Caco-2 (cell line): ENCODE measurements at regions of chr17 and their contacts with region 1.

Region 1: GRCh38 chr17:50397111-50397918 is at the start of gene LRRC59:
- DNase-seq: peak; percentile 96 to 100
- H3K4me3 ChIP-seq: peak within 1 kb of the TSS; percentile 72
- H3K4me3 Mint-ChIP-seq: peak within 1 kb of the TSS; percentile 76
- H3K27ac Mint-ChIP-seq: peak within 1 kb of the TSS; percentile 71
- H3K4me1 ChIP-seq: peaks cover 5% of the 10 kb centered on the region; the same call in 1 of the 2 replicates
- H3K4me1 Mint-ChIP-seq: peaks cover 12% of the 10 kb centered on the region
- H3K27me3 ChIP-seq: no peaks in the 10 kb centered on the region
- H3K27me3 Mint-ChIP-seq: no peaks in the 10 kb centered on the region
- CTCF ChIP-seq: peak; percentile 100
- total RNA-seq, gene LRRC59: 324 and 336 TPM in 2 replicates

Region 2: DNA sequence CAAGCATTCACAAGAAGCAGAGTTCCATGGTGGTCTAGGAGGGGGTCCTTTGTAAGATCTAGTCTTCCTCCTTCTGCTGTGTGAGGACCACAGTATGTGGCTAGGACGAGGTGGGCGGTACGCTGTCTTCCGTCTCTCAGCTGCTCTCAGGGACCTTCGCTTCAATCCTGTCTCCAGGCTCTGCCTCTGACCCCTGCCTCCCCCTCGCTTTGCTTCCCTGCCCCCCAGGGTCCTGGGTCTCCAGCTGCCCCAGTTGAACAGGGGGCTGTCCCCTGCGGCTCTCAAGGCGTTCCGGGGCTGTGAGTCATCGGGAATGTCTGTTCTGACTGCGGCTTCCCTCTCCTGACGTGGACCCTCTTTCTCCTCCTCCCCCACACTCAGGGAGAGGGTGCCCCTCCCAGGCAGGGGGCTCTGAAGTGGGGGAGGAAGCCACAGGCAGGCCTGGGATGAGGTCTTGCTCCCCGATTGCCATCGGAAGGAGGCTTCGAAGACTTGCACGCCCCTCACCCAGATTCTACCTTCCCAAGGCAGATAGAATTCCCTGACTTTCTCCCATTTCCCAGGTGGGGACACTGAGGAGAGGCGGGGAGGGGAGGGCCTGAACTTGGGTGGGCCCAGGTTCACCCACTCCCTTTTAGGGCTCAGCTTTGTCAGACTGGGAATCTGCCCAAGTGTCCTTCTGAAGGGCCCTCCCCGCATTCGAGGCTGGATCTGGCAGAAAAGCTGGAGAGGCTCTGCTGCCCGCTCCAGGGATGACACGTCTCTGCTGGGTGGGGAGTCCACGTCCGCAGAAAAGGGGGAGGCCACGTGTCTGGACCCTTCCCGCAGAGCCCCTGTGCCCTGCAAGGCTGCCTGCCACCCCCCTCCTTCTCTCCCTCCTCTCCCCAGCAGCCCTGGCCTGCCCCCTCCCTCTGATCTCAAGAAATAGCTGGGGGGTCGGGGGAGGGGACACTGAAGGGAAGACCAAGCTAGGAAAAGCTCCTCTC is 186.8 kb before region 1 on chr17:
- CTCF ChIA-PET with region 1: no interaction called
- POLR2A ChIA-PET with region 1: no interaction called
- intact Hi-C with region 1: no loop called
- DNase-seq: peak; percentile 70 to 93
- H3K4me3 ChIP-seq: no peak overlapping the region
- H3K4me3 Mint-ChIP-seq: peak overlapping the region; percentile 27
- H3K27ac Mint-ChIP-seq: peak overlapping the region; percentile 56
- H3K4me1 ChIP-seq: peaks cover 74% of the 10 kb centered on the region
- H3K4me1 Mint-ChIP-seq: peaks cover 73% of the 10 kb centered on the region
- H3K27me3 ChIP-seq: no peaks in the 10 kb centered on the region
- H3K27me3 Mint-ChIP-seq: no peaks in the 10 kb centered on the region
- CTCF ChIP-seq: no peak

Region 3: DNA sequence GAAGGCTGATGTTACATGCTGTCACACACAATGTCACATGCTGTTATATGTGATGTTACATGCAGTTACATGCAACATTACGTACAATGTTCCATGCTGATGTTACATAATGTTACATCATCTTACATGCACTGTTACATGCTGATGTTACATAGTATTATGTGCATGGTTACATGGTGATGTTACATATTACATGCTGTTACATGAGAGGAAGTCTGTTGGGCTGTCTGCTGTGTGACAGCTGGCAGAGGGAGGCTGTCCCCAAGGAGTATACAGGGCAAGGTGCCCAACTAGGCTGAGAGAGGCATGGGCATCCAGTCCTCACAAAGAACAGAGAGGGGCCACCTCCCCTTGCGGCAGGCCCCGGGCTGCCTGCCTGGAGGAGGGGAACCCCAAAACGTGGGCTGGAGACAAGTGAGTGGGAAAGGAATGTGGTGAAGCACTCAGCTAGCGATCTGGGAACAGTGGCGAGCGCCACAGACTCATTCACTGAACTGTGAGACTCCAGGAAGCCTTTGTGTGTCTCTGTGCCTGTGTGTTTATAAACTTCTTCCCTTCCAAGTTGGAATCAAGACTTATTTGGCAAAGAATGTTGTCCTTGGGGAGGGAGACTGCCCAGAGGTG is 92.4 kb before region 1 on chr17:
- CTCF ChIA-PET with region 1: no interaction called
- POLR2A ChIA-PET with region 1: no interaction called
- intact Hi-C with region 1: no loop called
- DNase-seq: no peak
- H3K4me3 ChIP-seq: no peak overlapping the region
- H3K4me3 Mint-ChIP-seq: no peak overlapping the region
- H3K27ac Mint-ChIP-seq: peak overlapping the region; percentile 41
- H3K4me1 ChIP-seq: peaks cover 5% of the 10 kb centered on the region; the same call in 1 of the 2 replicates
- H3K4me1 Mint-ChIP-seq: peaks cover 20% of the 10 kb centered on the region
- H3K27me3 ChIP-seq: no peaks in the 10 kb centered on the region
- H3K27me3 Mint-ChIP-seq: no peaks in the 10 kb centered on the region
- CTCF ChIP-seq: no peak

Region 4: GRCh38 chr17:50345432-50346312 is 51.6 kb before region 1 on chr17 and contains the start of gene XYLT2:
- CTCF ChIA-PET with region 1: interaction called, 19 read pairs
- POLR2A ChIA-PET with region 1: interaction called, 9 read pairs
- intact Hi-C with region 1: loop called (anchors 2 kb)
- DNase-seq: peak; percentile 94 to 99
- H3K4me3 ChIP-seq: peak within 1 kb of the TSS; percentile 85
- H3K4me3 Mint-ChIP-seq: peak within 1 kb of the TSS; percentile 96
- H3K27ac Mint-ChIP-seq: peak within 1 kb of the TSS; percentile 81
- H3K4me1 ChIP-seq: peaks cover 13% of the 10 kb centered on the region
- H3K4me1 Mint-ChIP-seq: peaks cover 22% of the 10 kb centered on the region
- H3K27me3 ChIP-seq: no peaks in the 10 kb centered on the region
- H3K27me3 Mint-ChIP-seq: no peaks in the 10 kb centered on the region
- CTCF ChIP-seq: no peak
- total RNA-seq, gene XYLT2: 72.9 and 75.8 TPM in 2 replicates

Region 5: DNA sequence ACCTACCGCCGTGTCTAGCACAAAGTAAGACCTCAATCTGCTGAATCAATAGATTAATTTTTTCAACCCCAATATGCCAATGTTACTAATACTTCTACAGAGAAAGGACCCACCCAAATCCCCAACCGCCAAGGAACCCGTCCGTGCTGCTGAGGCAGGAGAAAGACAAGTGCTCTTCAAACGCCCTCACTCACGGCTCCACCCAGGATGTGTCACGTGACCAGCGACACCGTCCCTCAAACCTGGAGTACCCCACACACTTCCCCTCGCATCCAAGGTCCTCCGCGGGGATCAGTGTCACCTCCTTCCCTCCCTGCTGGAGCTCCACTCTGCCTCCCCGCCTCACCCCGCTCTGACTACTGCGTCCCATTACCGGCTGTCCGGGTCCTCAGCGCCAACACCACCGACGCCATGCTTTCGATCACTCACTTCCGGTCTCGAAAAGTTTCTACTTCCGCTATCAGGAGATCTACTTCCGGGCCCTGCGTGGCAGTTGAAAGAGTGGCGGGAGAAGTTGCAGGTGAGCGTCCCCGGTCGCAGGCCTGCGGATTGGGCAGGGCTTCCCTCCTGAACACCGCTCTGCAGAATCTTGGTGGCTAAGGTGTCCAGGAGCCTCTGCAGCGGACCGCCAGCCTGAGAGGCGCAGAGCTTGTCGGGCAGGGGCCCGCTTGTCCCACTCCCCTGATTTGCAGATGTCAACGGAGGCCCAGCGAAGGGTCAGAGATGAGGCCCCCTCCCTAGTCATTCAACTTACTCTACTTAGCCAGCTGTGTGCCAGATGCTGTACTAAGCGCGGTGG is 24.4 kb before region 1 on chr17 and contains the starts of genes EME1 and MRPL27:
- CTCF ChIA-PET with region 1: interaction called, 13 read pairs
- POLR2A ChIA-PET with region 1: interaction called, 7 read pairs
- intact Hi-C with region 1: no loop called
- DNase-seq: peak; percentile 96
- H3K4me3 ChIP-seq: peak within 1 kb of the TSS; percentile 52
- H3K4me3 Mint-ChIP-seq: peak within 1 kb of the TSS; percentile 89
- H3K27ac Mint-ChIP-seq: peak within 1 kb of the TSS; percentile 98
- H3K4me1 ChIP-seq: peaks cover 7% of the 10 kb centered on the region; the same call in 1 of the 2 replicates
- H3K4me1 Mint-ChIP-seq: peaks cover 17% of the 10 kb centered on the region
- H3K27me3 ChIP-seq: no peaks in the 10 kb centered on the region
- H3K27me3 Mint-ChIP-seq: no peaks in the 10 kb centered on the region
- CTCF ChIP-seq: no peak
- total RNA-seq, gene EME1: 43.5 and 48.5 TPM in 2 replicates
- total RNA-seq, gene MRPL27: 196 and 203 TPM in 2 replicates

Region 6: GRCh38 chr17:50425682-50426471 is 28.6 kb after region 1 on chr17 and contains the start of gene ACSF2:
- CTCF ChIA-PET with region 1: interaction called, 40 read pairs
- POLR2A ChIA-PET with region 1: interaction called, 9 read pairs
- intact Hi-C with region 1: loop called (anchors 1 kb)
- DNase-seq: peak; percentile 92 to 93
- H3K4me3 ChIP-seq: peak within 1 kb of the TSS; percentile 74
- H3K4me3 Mint-ChIP-seq: peak within 1 kb of the TSS; percentile 80
- H3K27ac Mint-ChIP-seq: peak within 1 kb of the TSS; percentile 54
- H3K4me1 ChIP-seq: peaks cover 64% of the 10 kb centered on the region
- H3K4me1 Mint-ChIP-seq: peaks cover 60% of the 10 kb centered on the region
- H3K27me3 ChIP-seq: no peaks in the 10 kb centered on the region
- H3K27me3 Mint-ChIP-seq: no peaks in the 10 kb centered on the region
- CTCF ChIP-seq: peak in 1 of 2 experiments; percentile 35
- total RNA-seq, gene ACSF2: 135 and 161 TPM in 2 replicates

Region 7: DNA sequence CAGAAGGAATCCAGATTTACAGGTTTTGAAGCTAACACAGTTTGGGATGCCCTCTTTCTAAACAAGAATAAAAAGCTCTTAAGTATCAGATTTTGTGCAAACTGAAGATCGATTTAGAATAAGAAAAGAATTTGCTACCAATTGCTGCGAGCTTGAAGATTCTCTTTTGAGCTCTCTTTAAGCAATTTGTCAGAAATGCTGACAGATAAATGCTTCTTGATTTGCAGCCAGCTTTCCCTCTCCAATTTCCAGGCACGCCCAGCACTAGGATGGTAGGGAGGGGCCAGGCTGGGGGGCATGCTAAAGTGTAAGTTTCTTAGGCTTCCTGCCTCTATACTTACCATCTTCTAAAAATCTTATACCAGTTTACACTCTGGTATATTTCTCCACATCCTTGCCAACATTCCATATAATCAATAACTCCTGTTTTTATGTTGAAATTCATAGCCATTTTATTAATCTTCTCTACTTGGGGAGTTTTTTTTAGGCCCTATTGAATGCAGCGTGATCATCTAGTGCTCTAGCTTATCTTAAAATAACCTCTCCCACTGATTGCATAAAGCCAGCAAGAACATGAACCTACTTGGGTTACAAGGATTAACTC is 46.2 kb after region 1 on chr17:
- CTCF ChIA-PET with region 1: interaction called, 17 read pairs
- POLR2A ChIA-PET with region 1: interaction called, 11 read pairs
- intact Hi-C with region 1: no loop called
- DNase-seq: peak; percentile 71 to 77
- H3K4me3 ChIP-seq: no peak overlapping the region
- H3K4me3 Mint-ChIP-seq: peak overlapping the region; percentile 43
- H3K27ac Mint-ChIP-seq: peak overlapping the region; percentile 74
- H3K4me1 ChIP-seq: peaks cover 66% of the 10 kb centered on the region
- H3K4me1 Mint-ChIP-seq: peaks cover 69% of the 10 kb centered on the region
- H3K27me3 ChIP-seq: no peaks in the 10 kb centered on the region
- H3K27me3 Mint-ChIP-seq: no peaks in the 10 kb centered on the region
- CTCF ChIP-seq: no peak

Region 8: GRCh38 chr17:50775926-50776325 is 378.6 kb after region 1 on chr17:
- CTCF ChIA-PET with region 1: no interaction called
- POLR2A ChIA-PET with region 1: no interaction called
- intact Hi-C with region 1: no loop called
- DNase-seq: no peak
- H3K4me3 ChIP-seq: no peak overlapping the region
- H3K4me3 Mint-ChIP-seq: no peak overlapping the region
- H3K27ac Mint-ChIP-seq: no peak overlapping the region
- H3K4me1 ChIP-seq: no peaks in the 10 kb centered on the region
- H3K4me1 Mint-ChIP-seq: peaks cover 7% of the 10 kb centered on the region
- H3K27me3 ChIP-seq: no peaks in the 10 kb centered on the region
- H3K27me3 Mint-ChIP-seq: no peaks in the 10 kb centered on the region
- CTCF ChIP-seq: no peak